CD14-positive monocyte (primary cell): ENCODE measurements at regions of chr1 and their contacts with region 1.

Region 1: GRCh38 chr1:117512743-117513321 is 93.0 kb upstream of the TENT5C start:
- DNase-seq: peak in 1 of 3 donors; percentile 1
- H3K4me3 ChIP-seq: no peak overlapping the region
- H3K4me3 Mint-ChIP-seq: no peak overlapping the region
- H3K27ac ChIP-seq: no peak overlapping the region
- H3K27ac Mint-ChIP-seq: no peak overlapping the region
- H3K4me1 ChIP-seq: no peaks in the 10 kb centered on the region
- H3K4me1 Mint-ChIP-seq: peaks cover 1% of the 10 kb centered on the region
- H3K27me3 ChIP-seq: no peaks in the 10 kb centered on the region
- H3K27me3 Mint-ChIP-seq: no peaks in the 10 kb centered on the region
- CTCF ChIP-seq: peak; percentile 61

Region 2: DNA sequence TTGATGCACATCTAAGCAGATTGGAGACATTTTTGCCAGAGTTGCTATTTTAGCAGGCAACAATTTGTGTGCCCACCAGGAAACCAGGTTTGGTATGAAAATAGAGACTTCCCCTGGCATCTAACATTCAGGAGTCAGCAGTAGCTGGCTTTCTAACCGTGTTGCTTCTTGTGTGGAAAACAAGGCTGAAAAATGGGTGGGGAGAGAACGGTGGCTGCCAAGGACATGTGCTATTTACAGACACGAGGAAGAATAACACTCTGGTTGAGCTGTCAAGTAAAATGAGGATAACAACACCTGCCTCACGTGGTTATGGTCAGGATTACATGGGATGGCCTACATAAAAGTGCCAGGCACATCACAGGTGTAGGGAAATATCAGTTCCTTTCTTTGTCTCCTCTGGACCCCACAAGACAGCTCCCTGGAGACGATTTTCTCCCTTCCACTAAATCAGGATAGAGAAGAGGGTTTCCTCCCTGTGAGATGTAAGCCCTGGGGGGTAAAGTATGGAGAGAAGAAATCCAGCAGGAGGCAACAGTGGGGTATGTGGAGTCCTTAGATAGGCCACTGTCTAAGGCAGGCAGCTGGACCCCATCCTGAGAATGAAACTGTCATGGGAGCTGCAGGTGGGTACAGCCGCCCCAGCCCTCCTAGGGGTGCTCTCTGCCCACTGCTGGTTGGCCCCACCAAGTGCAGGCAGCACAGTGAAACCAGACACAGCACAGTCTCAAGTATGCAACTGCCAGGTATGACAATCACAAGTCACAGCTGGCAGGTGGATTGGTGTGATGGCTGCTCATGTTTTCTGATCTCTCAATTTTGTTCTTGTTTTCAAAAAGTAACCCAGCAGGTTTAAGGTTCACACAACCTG is 173.3 kb after region 1 on chr1:
- intact Hi-C with region 1: no loop called
- DNase-seq: no peak
- H3K4me3 ChIP-seq: no peak overlapping the region
- H3K4me3 Mint-ChIP-seq: no peak overlapping the region
- H3K27ac ChIP-seq: no peak overlapping the region
- H3K27ac Mint-ChIP-seq: no peak overlapping the region
- H3K4me1 ChIP-seq: no peaks in the 10 kb centered on the region
- H3K4me1 Mint-ChIP-seq: no peaks in the 10 kb centered on the region
- H3K27me3 ChIP-seq: no peaks in the 10 kb centered on the region
- H3K27me3 Mint-ChIP-seq: peaks cover 0 to 3% (median 0%) of the 10 kb centered on the region in 3 donors
- CTCF ChIP-seq: no peak

Region 3: GRCh38 chr1:117758444-117759316 is 245.8 kb after region 1 on chr1:
- intact Hi-C with region 1: loop called in 1 of 2 experiments (anchors 5 kb)
- DNase-seq: peak; percentile 29 to 55 (median 38)
- H3K4me3 ChIP-seq: peak overlapping the region in 1 of 3 experiments; percentile 35
- H3K4me3 Mint-ChIP-seq: peak overlapping the region; percentile 69 to 80
- H3K27ac ChIP-seq: no peak overlapping the region
- H3K27ac Mint-ChIP-seq: peak overlapping the region in 2 of 7 donors; percentile 26 to 29
- H3K4me1 ChIP-seq: peaks cover 10 to 11% of the 10 kb centered on the region in 2 donors
- H3K4me1 Mint-ChIP-seq: peaks cover 14% of the 10 kb centered on the region
- H3K27me3 ChIP-seq: peaks cover 3 to 4% of the 10 kb centered on the region in 2 donors
- H3K27me3 Mint-ChIP-seq: peaks cover 11 to 24% (median 16%) of the 10 kb centered on the region in 3 donors
- CTCF ChIP-seq: peak; percentile 91